Activated naive CD4-positive, alpha-beta T cell treated with anti-CD3 and anti-CD28 coated beads, Interleukin-2, amount 10 ng/mL, durations not matched to agents 7 days and 5 days (primary cell): ENCODE measurements at regions of chr3 and their contacts with region 1.

Region 1: GRCh38 chr3:64023187-64023848 is at the start of gene PSMD6:
- DNase-seq: peak; percentile 93
- H3K4me3 Mint-ChIP-seq: peak within 1 kb of the TSS; percentile 88
- H3K27ac Mint-ChIP-seq: peak within 1 kb of the TSS; percentile 93
- H3K4me1 Mint-ChIP-seq: peaks cover 29% of the 10 kb centered on the region
- H3K27me3 Mint-ChIP-seq: peaks cover 11% of the 10 kb centered on the region

Region 2: DNA sequence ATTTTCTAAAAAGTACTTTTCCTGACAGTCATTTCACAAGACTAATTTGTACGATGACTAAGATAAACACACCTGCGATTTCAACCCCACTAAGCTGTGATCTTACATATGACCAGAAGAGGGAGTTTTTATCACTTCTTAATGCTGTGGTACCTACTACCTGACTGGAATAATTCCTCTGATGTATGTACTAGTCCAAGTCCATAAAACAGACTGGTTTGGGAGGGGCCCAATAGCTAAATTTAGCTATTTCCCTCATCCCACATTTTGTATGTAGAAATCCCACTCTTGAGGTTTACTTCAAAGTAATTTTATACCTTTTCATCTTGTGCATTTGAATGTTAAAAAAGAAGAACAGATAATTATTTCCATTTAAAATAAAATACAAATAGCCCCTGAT is 61.4 kb before region 1 on chr3:
- CTCF ChIA-PET with region 1: interaction called, 33 read pairs
- DNase-seq: no peak
- H3K4me3 Mint-ChIP-seq: no peak overlapping the region
- H3K27ac Mint-ChIP-seq: no peak overlapping the region
- H3K4me1 Mint-ChIP-seq: peaks cover 43% of the 10 kb centered on the region
- H3K27me3 Mint-ChIP-seq: no peaks in the 10 kb centered on the region

Region 3: GRCh38 chr3:63993653-63994079 is 29.7 kb before region 1 on chr3:
- CTCF ChIA-PET with region 1: interaction called, 25 read pairs
- DNase-seq: peak; percentile 64
- H3K4me3 Mint-ChIP-seq: no peak overlapping the region
- H3K27ac Mint-ChIP-seq: peak overlapping the region; percentile 45
- H3K4me1 Mint-ChIP-seq: peaks cover 46% of the 10 kb centered on the region
- H3K27me3 Mint-ChIP-seq: no peaks in the 10 kb centered on the region

Region 4: GRCh38 chr3:64008017-64008971 is 15.0 kb before region 1 on chr3:
- CTCF ChIA-PET with region 1: interaction called, 15 read pairs
- DNase-seq: no peak
- H3K4me3 Mint-ChIP-seq: no peak overlapping the region
- H3K27ac Mint-ChIP-seq: no peak overlapping the region
- H3K4me1 Mint-ChIP-seq: peaks cover 20% of the 10 kb centered on the region
- H3K27me3 Mint-ChIP-seq: no peaks in the 10 kb centered on the region

Region 5: GRCh38 chr3:64073158-64073761 is 49.9 kb after region 1 on chr3:
- CTCF ChIA-PET with region 1: no interaction called
- DNase-seq: no peak
- H3K4me3 Mint-ChIP-seq: no peak overlapping the region
- H3K27ac Mint-ChIP-seq: no peak overlapping the region
- H3K4me1 Mint-ChIP-seq: no peaks in the 10 kb centered on the region
- H3K27me3 Mint-ChIP-seq: peaks cover 26% of the 10 kb centered on the region

Region 6: DNA sequence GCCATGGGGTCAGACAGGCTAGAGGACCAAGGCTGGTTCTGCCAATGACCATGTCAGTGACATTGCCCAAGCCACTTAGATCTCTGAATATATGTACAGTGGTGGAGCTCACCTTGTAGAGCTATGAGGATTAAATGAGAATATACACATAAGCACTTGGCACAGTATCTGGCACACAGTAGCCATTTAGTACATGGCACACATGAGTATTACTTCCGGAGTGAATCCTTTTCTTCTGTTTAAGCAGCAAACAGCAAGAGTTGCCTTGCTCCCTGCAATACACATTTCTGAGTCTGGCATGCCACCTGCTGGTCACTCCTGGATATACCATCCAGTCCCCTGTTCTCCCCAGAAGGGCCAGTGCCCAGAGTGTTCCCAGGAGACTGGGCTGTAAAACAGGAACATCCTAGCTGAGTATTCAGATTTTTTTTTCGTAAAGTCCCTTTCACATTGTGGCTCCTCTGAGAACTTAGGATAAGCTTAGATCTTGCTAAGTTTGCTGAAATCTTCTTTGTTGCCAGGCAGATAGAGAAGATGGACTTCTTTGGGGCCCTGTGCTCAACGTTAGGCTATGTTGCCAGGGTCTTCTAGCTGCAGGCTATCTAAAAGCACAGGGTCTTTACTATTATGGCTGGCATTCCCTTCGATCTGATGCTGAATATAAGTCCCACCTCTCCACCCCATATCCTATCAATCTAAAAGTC is 461.1 kb after region 1 on chr3:
- CTCF ChIA-PET with region 1: interaction called, 32 read pairs
- DNase-seq: peak; percentile 80
- H3K4me3 Mint-ChIP-seq: no peak overlapping the region
- H3K27ac Mint-ChIP-seq: no peak overlapping the region
- H3K4me1 Mint-ChIP-seq: peaks cover 5% of the 10 kb centered on the region
- H3K27me3 Mint-ChIP-seq: peaks cover 19% of the 10 kb centered on the region